Left lung (tissue), 14 donors: ENCODE measurements at regions of chr15 and their contacts with region 1.

Region 1: GRCh38 chr15:39756806-39757522 is 25.7 kb downstream of the FSIP1 start:
- DNase-seq: peak in 2 of 4 donors; percentile 68 to 74
- ATAC-seq: peak; percentile 42
- H3K4me3 ChIP-seq: no peak overlapping the region
- H3K27ac ChIP-seq: no peak overlapping the region
- H3K4me1 ChIP-seq: no peaks in the 10 kb centered on the region
- H3K27me3 ChIP-seq: no peaks in the 10 kb centered on the region
- CTCF ChIP-seq: peak; percentile 72 to 77

Region 2: DNA sequence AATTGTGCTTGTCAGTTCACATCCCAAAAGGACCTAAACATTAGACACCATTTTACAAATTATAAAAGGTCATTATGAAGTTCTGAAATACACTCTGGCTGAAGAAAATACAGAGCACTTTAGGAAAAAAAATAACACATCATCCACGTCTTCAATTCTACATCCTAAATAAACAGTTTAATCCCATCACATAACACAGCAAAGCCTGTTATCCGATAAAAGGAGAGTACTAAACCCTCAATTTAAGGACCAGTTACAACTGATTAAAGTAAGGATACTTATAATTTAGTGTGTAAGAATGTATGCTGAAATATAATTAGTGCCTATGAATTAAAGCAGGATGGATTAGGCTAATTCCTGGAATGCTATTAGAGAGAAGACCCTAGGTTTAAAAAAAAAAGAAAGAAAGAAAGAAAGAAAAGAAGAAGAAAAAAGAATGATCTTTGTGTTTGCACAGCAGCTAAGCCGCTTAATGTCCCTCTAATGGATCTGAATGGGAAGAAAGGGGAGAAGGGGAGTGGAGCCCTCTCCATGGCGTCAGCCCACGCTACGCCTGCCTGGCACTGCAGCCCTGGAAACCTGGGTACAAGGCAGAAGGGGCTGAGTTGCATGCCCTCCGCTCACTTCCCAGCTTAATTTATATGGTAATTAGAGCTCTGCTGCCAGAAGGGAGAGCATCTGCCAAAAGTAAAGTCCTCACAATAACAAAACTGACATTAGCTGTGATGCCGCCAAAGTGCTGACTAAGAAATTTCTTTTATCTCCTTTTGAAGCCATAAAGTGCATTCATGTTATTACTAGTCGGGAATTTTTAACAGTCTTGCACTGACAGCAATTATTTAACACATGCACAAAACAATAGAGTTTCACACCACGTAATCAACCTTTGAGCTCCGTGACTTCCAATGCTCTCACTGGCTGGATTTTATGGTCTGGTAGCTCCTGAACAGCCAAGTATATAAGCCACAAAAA is 64.3 kb before region 1 on chr15:
- intact Hi-C with region 1: loop called in 1 of 2 experiments (anchors 5 kb)
- DNase-seq: peak in 2 of 4 donors; percentile 56 to 67
- ATAC-seq: no peak
- H3K4me3 ChIP-seq: no peak overlapping the region
- H3K27ac ChIP-seq: no peak overlapping the region
- H3K4me1 ChIP-seq: no peaks in the 10 kb centered on the region
- H3K27me3 ChIP-seq: no peaks in the 10 kb centered on the region
- CTCF ChIP-seq: no peak

Region 3: GRCh38 chr15:39833515-39833981 is 76.6 kb after region 1 on chr15:
- intact Hi-C with region 1: no loop called
- DNase-seq: no peak
- ATAC-seq: no peak
- H3K4me3 ChIP-seq: no peak overlapping the region
- H3K27ac ChIP-seq: no peak overlapping the region
- H3K4me1 ChIP-seq: no peaks in the 10 kb centered on the region
- H3K27me3 ChIP-seq: no peaks in the 10 kb centered on the region
- CTCF ChIP-seq: no peak

Region 4: GRCh38 chr15:39852250-39852649 is 95.3 kb after region 1 on chr15:
- intact Hi-C with region 1: no loop called
- DNase-seq: no peak
- ATAC-seq: peak; percentile 57
- H3K4me3 ChIP-seq: no peak overlapping the region
- H3K27ac ChIP-seq: peak overlapping the region in 1 of 2 donors; percentile 43
- H3K4me1 ChIP-seq: peaks cover 0 to 3% of the 10 kb centered on the region in 2 donors
- H3K27me3 ChIP-seq: no peaks in the 10 kb centered on the region
- CTCF ChIP-seq: no peak